Sciatic nerve (tissue), 2 donors: ENCODE measurements at regions of chr19 and their contacts with region 1.

Region 1: GRCh38 chr19:4638828-4639530 is at the start of gene TNFAIP8L1:
- DNase-seq: peak; percentile 98
- ATAC-seq: peak; percentile 97
- total RNA-seq, gene TNFAIP8L1: 12.8 TPM

Region 2: GRCh38 chr19:4557971-4558941 is 80.7 kb before region 1 on chr19:
- intact Hi-C with region 1: loop called (anchors 10 kb)
- DNase-seq: no peak
- ATAC-seq: no peak

Region 3: DNA sequence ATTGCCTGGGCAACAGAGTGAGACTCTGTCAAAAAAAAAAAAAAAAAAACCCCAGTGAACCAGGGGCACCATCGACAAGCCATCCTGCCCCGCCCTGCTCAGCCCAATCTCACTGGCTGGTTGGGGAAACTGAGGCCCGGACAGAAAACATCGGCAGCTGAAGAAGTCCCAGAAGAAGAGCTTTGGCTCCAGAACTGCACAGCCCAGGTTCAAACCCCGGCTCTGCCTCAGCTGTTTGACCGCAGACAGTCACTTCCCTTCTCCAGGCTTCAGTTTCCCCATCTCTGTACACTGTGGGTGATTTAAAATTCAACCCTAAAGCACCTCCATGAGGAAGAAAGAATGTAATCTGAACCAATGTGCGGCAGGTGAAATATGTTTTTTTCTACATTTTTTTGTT is 70.1 kb before region 1 on chr19:
- intact Hi-C with region 1: no loop called
- DNase-seq: no peak
- ATAC-seq: no peak